Mammary epithelial cell (primary cell): ENCODE measurements at regions of chr5 and their contacts with region 1.

Region 1: DNA sequence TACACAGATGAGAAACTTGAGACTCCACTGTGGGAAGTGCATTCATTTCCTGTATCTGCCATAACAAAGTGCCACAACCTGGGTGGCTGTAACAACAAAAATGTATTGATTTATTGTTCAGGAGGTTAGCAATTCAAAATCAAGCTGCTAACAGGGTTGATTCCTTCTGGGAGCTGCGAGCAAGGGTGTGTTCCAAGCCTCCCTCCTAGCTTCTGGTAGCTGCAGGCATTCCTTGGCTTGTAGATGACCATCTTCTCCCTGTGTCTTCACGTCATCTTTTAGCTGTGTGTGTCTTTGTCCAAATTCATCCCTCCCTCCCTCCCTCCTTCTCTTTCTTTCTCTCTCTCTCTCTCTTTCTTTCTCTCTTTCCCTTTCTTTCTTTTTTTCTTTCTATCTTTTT is 258.1 kb downstream of the MSX2 start:
- DNase-seq: no peak
- H3K4me3 ChIP-seq: no peak overlapping the region
- H3K27ac ChIP-seq: no peak overlapping the region
- H3K4me1 ChIP-seq: no peaks in the 10 kb centered on the region
- H3K27me3 ChIP-seq: no peaks in the 10 kb centered on the region
- CTCF ChIP-seq: no peak

Region 2: DNA sequence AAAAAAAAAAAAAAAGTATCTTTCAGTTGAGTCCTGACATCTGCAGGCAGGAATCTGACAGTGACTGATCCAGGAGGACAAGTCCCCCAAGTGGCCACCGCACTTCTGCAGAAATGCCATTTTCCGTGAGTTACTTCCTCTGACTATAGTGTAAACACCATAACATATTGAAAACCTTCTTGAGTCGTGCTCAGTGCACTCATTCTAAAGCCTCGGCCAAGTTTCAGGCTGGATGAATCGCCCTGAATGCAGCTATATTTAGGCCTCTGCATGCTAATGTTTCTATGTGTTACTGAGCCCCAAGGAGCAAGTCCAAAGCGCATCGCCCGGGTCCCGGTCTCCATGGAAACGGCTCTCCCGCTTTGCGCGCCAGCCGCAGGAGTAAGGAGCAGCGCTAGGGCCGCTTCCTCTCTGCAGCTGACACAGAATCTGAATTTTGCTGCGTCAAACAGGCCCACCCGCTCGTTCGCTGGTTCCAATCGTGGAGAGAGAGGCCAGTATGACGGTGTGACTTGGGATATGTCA is 77.3 kb after region 1 on chr5:
- CTCF ChIA-PET with region 1: no interaction called
- dilution Hi-C with region 1: loop called (anchors 5 kb)
- in situ Hi-C with region 1: no loop called
- intact Hi-C with region 1: no loop called
- DNase-seq: no peak
- H3K4me3 ChIP-seq: no peak overlapping the region
- H3K27ac ChIP-seq: no peak overlapping the region
- H3K4me1 ChIP-seq: no peaks in the 10 kb centered on the region
- H3K27me3 ChIP-seq: no peaks in the 10 kb centered on the region
- CTCF ChIP-seq: no peak

Region 3: GRCh38 chr5:175434800-175435199 is 452.3 kb after region 1 on chr5:
- CTCF ChIA-PET with region 1: no interaction called
- dilution Hi-C with region 1: no loop called
- in situ Hi-C with region 1: no loop called
- intact Hi-C with region 1: no loop called
- DNase-seq: no peak
- H3K4me3 ChIP-seq: no peak overlapping the region
- H3K27ac ChIP-seq: no peak overlapping the region
- H3K4me1 ChIP-seq: no peaks in the 10 kb centered on the region
- H3K27me3 ChIP-seq: no peaks in the 10 kb centered on the region
- CTCF ChIP-seq: no peak